ENCODE measurements at regions of chr2 and their contacts with region 1.

Region 1: DNA sequence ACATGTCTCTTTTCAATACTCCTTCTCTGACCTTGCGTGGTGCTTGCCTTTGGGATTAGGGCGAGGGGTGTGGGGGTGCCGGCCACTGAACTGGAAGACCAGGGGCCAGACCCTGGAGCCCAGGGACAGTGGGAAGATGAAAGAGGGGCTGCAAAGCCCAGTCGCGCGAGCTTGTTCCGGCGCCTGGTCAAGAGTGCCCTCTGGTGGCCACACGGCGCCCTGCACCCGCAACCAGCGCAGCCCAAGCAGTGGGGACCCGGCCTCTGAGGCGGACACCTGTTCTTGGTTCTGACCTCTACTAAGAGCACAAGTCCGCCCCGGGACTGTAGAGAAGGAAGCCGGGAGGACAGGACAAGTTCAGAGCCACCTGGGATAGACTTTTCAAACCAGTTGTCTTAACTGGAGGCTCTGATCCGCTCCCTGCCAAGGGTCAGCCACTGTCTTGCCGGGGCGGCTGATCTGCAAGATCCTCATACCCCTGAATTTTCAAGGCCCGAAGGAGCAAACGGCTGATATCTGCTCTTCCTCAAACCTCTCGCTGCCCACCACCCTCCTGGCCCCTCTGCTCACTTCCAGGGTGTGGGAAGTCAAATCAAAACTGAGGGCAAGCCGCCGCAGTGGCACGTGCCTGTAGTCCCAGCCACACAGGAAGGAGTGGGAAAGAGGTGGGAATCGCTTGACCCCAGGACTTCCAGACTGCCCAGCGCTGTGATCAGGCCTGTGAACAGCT is 14.9 kb upstream of the MSH6 start:
- DNase-seq: peak; percentile 42 to 81 (median 64)
- ATAC-seq: peak; percentile 86
- H3K4me3 ChIP-seq: no peak overlapping the region
- H3K4me3 Mint-ChIP-seq: no peak overlapping the region
- H3K27ac ChIP-seq: no peak overlapping the region
- H3K27ac Mint-ChIP-seq: no peak overlapping the region
- H3K4me1 ChIP-seq: peaks cover 8% of the 10 kb centered on the region
- H3K4me1 Mint-ChIP-seq: peaks cover 4% of the 10 kb centered on the region
- H3K27me3 ChIP-seq: no peaks in the 10 kb centered on the region
- H3K27me3 Mint-ChIP-seq: peaks cover 4% of the 10 kb centered on the region
- CTCF ChIP-seq: peak; percentile 97

Region 2: DNA sequence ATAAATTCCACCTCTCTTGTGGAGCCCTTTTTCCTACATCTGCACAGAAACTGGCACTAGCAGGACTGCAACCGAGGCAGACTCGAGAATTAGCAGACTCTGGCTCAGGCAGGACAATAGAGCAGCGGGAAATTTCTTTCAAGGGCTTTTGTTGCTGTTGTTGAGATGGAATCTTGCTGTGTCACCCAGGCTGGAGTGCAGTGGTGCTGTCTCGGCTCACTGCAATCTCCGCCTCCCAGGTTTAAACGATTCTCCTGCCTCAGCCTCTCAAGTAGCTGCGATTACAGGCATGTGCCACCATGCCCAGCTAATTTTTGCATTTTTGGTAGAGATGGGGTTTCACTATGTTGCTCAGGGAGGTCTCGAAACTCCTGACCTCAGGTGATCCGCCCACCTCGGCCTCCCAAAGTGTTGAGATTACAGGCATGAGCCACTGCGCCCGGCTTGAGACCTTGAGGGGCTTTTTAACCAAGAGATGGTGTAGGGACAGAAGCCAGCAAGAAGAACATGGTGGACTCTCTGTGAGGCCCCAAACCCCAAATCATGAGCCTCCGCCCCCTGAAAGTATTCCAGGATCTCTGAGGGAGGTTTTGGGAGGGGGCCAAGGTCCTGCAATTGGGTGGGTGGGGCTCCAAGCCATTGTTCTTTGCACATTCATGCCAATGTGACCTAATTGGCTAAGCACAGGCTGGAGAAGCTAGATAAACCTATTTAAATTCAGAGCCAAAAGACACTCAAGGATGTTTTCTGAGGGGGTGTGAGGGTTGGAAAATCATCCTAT is 433.5 kb before region 1 on chr2:
- CTCF ChIA-PET with region 1: interaction called, 13 read pairs
- POLR2A ChIA-PET with region 1: interaction called, 9 read pairs
- intact Hi-C with region 1: loop called in 1 of 2 experiments (anchors 1 kb)
- DNase-seq: no peak
- ATAC-seq: no peak
- H3K4me3 ChIP-seq: no peak overlapping the region
- H3K4me3 Mint-ChIP-seq: no peak overlapping the region
- H3K27ac ChIP-seq: no peak overlapping the region
- H3K27ac Mint-ChIP-seq: no peak overlapping the region
- H3K4me1 ChIP-seq: no peaks in the 10 kb centered on the region
- H3K4me1 Mint-ChIP-seq: no peaks in the 10 kb centered on the region
- H3K27me3 ChIP-seq: peaks cover 0 to 5% of the 10 kb centered on the region in 2 experiments
- H3K27me3 Mint-ChIP-seq: peaks cover 4% of the 10 kb centered on the region
- CTCF ChIP-seq: no peak

Region 3: DNA sequence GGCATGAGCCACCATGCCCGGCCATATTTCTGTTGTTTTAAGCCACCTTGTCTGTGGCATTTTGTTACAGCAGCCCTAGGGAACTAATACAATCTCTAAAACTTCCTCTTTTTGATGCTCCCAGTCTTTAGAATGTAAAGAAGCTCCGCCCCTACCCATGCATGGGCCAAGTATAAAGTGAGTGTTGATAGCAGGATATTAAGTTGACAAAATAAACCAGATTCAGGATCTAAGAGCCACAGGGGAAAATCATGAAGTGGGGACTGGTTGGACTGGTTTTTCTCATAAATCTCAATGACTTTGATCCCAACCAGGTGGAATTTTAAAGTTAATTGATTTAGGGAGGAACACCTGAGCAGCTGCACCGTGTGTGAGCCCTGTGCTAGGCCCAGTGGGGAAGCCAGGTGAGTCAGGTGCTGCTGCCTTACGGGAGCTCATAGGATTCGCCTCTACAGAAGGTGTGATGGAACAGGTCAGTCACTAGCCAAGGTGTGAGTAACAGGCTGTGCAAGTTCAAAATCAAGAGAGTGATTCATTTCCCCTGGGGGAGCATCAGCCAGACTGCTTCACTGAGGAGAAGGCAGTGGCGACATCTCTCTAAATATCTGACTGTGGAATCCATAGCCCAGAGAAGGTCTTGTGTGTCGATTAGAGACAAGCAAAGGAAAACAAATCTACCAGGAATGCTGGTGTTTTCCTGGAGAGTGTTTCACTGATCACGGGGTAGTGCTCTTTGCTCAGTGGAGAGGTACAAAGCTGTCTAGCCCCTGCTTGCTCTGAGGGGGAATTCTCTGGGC is 428.1 kb before region 1 on chr2:
- CTCF ChIA-PET with region 1: interaction called, 13 read pairs
- POLR2A ChIA-PET with region 1: interaction called, 9 read pairs
- intact Hi-C with region 1: loop called in 1 of 2 experiments (anchors 1 kb)
- DNase-seq: no peak
- ATAC-seq: no peak
- H3K4me3 ChIP-seq: no peak overlapping the region
- H3K4me3 Mint-ChIP-seq: no peak overlapping the region
- H3K27ac ChIP-seq: no peak overlapping the region
- H3K27ac Mint-ChIP-seq: no peak overlapping the region
- H3K4me1 ChIP-seq: peaks cover 2% of the 10 kb centered on the region
- H3K4me1 Mint-ChIP-seq: peaks cover 4% of the 10 kb centered on the region
- H3K27me3 ChIP-seq: peaks cover 2 to 11% of the 10 kb centered on the region in 2 experiments
- H3K27me3 Mint-ChIP-seq: peaks cover 12% of the 10 kb centered on the region
- CTCF ChIP-seq: no peak

Region 4: DNA sequence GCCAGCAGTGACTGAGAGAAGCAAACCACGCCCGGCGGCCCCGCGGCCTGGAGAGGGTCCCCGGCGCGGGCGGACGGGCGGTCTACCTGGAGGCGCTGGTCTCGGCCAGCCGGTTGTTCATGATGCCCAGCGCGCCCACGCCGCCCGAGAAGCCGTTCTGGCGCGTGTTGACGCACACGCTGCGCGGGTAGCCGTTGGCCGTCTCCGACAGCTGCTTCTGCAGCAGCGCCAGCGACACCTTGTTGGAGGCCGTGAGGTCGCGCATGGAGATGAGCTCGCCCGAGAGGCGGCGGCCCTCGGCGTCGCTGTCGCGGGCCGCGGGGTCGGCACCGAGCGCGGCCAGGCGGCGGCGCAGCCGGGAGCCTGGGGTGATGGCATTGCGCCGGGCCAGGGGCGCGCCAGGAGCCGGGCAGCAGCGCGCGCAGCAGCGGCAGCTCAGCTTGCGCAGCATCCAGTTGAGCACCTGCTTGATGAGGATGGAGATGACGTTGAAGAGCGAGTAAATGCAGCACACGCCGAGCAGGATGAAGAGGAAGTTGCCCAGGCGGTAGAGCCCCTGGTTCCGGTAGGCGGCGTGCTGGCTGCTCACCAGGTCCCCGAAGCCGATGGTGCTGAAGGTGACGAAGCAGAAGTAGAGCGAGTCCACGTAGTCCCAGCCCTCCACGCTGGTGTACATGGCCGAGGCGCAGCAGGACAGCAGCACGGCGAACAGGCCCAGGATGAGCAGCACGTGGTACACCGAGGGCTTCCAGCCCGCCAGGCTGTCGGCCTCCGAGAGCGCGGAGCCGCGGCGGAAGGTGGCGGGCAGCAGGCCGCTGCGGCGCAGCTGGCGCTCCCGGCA is 247.0 kb before region 1 on chr2:
- CTCF ChIA-PET with region 1: no interaction called
- POLR2A ChIA-PET with region 1: interaction called, 3 read pairs
- intact Hi-C with region 1: loop called in 1 of 2 experiments (anchors 5 kb)
- DNase-seq: peak; percentile 51 to 89 (median 68)
- ATAC-seq: peak; percentile 92
- H3K4me3 ChIP-seq: peak overlapping the region; percentile 59
- H3K4me3 Mint-ChIP-seq: peak overlapping the region; percentile 93
- H3K27ac ChIP-seq: no peak overlapping the region
- H3K27ac Mint-ChIP-seq: peak overlapping the region; percentile 77
- H3K4me1 ChIP-seq: peaks cover 18% of the 10 kb centered on the region
- H3K4me1 Mint-ChIP-seq: peaks cover 11% of the 10 kb centered on the region
- H3K27me3 ChIP-seq: no peaks in the 10 kb centered on the region
- H3K27me3 Mint-ChIP-seq: no peaks in the 10 kb centered on the region
- CTCF ChIP-seq: peak; percentile 60

Region 5: DNA sequence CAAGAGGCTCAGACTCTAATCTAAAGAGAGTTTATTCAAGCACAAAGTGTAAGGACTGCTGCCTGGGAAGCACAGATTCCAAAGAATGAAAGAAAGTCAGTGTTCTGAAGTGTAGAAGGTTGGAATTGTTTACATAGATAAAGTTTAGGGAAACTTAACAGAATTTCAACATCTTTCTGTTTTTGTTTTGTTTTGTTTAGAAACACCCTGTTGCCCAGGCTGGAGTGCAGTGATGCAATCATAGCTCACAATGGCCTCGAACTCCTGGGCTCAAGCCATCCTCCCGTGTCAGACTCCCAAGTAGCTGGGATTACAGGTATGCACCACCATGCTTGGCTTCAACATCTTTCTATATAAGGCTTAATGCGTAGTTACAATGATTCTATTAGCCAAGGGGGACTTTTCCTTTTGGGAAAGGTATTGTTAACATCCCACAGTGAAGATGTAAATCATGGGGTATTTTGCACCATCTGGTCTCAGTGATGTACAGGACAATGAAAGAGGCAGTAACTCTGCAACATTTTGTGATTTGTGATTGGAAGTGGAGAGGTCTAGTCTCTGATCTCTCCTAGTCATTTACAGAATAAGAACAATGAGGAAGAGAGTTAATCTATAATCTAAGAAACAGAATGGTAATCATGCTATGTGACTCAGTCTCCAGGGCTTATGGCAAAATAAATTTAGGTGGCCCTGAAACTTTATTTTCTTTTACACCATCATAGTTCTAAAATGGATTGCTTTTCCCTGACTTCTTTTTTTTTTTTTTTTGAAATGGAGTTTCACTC is 30.7 kb before region 1 on chr2:
- CTCF ChIA-PET with region 1: no interaction called
- POLR2A ChIA-PET with region 1: no interaction called
- intact Hi-C with region 1: no loop called
- DNase-seq: no peak
- ATAC-seq: no peak
- H3K4me3 ChIP-seq: no peak overlapping the region
- H3K4me3 Mint-ChIP-seq: no peak overlapping the region
- H3K27ac ChIP-seq: no peak overlapping the region
- H3K27ac Mint-ChIP-seq: no peak overlapping the region
- H3K4me1 ChIP-seq: no peaks in the 10 kb centered on the region
- H3K4me1 Mint-ChIP-seq: no peaks in the 10 kb centered on the region
- H3K27me3 ChIP-seq: no peaks in the 10 kb centered on the region
- H3K27me3 Mint-ChIP-seq: peaks cover 5% of the 10 kb centered on the region
- CTCF ChIP-seq: no peak

Region 6: GRCh38 chr2:47751875-47752357 is 16.1 kb before region 1 on chr2:
- CTCF ChIA-PET with region 1: interaction called, 14 read pairs
- POLR2A ChIA-PET with region 1: no interaction called
- intact Hi-C with region 1: no loop called
- DNase-seq: no peak
- ATAC-seq: no peak
- H3K4me3 ChIP-seq: no peak overlapping the region
- H3K4me3 Mint-ChIP-seq: no peak overlapping the region
- H3K27ac ChIP-seq: no peak overlapping the region
- H3K27ac Mint-ChIP-seq: no peak overlapping the region
- H3K4me1 ChIP-seq: peaks cover 4% of the 10 kb centered on the region
- H3K4me1 Mint-ChIP-seq: peaks cover 5% of the 10 kb centered on the region
- H3K27me3 ChIP-seq: no peaks in the 10 kb centered on the region
- H3K27me3 Mint-ChIP-seq: no peaks in the 10 kb centered on the region
- CTCF ChIP-seq: no peak

Region 7: DNA sequence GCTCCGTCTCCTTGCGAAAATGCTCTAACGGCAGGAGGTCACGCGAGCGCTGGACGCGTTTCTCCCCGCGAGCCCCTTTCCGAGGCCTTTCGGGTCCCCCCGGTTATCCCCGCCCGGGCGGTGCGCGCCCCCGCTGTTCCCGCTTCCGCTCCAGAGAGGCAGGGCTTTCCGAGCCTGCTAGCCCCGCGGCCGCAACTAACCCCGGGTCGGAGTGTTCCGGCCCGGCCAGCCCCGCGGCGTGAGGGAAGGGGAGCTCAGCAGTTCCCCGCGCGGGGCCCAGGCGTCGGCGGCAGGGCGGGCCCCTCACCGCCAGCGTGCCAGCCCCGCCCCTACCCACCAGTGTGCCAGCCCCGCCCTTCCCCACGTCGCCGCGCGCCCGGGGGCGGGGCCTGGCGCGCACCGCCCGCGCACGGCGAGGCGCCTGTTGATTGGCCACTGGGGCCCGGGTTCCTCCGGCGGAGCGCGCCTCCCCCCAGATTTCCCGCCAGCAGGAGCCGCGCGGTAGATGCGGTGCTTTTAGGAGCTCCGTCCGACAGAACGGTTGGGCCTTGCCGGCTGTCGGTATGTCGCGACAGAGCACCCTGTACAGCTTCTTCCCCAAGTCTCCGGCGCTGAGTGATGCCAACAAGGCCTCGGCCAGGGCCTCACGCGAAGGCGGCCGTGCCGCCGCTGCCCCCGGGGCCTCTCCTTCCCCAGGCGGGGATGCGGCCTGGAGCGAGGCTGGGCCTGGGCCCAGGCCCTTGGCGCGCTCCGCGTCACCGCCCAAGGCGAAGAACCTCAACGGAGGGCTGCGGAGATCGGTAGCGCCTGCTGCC is 14.8 kb after region 1 on chr2 and contains the start of gene MSH6:
- CTCF ChIA-PET with region 1: interaction called, 11 read pairs
- POLR2A ChIA-PET with region 1: interaction called, 8 read pairs
- intact Hi-C with region 1: no loop called
- DNase-seq: peak; percentile 75 to 97 (median 86)
- ATAC-seq: peak; percentile 93
- H3K4me3 ChIP-seq: peak within 1 kb of the TSS; percentile 78
- H3K4me3 Mint-ChIP-seq: peak within 1 kb of the TSS; percentile 95
- H3K27ac ChIP-seq: peak within 1 kb of the TSS; percentile 64 to 84
- H3K27ac Mint-ChIP-seq: peak within 1 kb of the TSS; percentile 86
- H3K4me1 ChIP-seq: peaks cover 39% of the 10 kb centered on the region
- H3K4me1 Mint-ChIP-seq: peaks cover 29% of the 10 kb centered on the region
- H3K27me3 ChIP-seq: no peaks in the 10 kb centered on the region
- H3K27me3 Mint-ChIP-seq: no peaks in the 10 kb centered on the region
- CTCF ChIP-seq: no peak
- total RNA-seq, gene MSH6: 37.3 to 38.5 TPM

Region 8: DNA sequence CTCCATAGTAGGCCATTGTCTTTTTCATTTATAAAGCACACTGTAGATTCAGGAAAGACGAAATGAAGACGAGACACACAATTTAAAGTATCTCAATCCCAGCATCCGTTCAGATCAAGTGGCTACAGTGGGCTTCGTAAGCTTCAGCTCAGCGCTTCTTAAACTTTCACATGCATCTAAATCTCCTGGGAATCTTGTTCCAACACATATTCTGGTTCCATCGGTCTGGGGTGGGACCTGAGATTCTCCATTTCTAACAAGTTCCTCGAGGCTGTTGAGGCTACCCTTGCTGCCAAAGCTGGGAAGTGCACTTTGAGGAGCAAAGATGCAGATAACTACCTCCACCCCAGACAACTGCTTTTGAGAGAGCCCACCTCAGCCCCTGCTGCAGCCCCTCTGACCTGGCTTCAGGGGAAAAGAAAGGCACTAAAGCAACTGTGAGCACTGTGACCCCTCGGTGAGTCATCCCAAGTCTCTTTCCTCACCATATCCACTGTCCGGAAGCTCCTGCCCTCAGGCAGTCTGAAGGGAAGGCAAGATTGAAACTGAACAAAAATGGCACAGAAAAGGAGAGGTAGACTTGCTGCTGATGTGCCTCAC is 339.4 kb after region 1 on chr2:
- CTCF ChIA-PET with region 1: interaction called, 3 read pairs
- POLR2A ChIA-PET with region 1: no interaction called
- intact Hi-C with region 1: loop called in 1 of 2 experiments (anchors 5 kb)
- DNase-seq: peak in 2 of 14 experiments; percentile 20 to 34
- ATAC-seq: no peak
- H3K4me3 ChIP-seq: no peak overlapping the region
- H3K4me3 Mint-ChIP-seq: no peak overlapping the region
- H3K27ac ChIP-seq: no peak overlapping the region
- H3K27ac Mint-ChIP-seq: no peak overlapping the region
- H3K4me1 ChIP-seq: peaks cover 18% of the 10 kb centered on the region
- H3K4me1 Mint-ChIP-seq: peaks cover 11% of the 10 kb centered on the region
- H3K27me3 ChIP-seq: no peaks in the 10 kb centered on the region
- H3K27me3 Mint-ChIP-seq: no peaks in the 10 kb centered on the region
- CTCF ChIP-seq: no peak